Activated CD4-positive, alpha-beta T cell treated with anti-CD3 and anti-CD28 coated beads, Interleukin-2, amount 10 ng/mL, durations not matched to agents 24 days and 14 days (primary cell): ENCODE measurements at regions of chr4 and their contacts with region 1.

Region 1: DNA sequence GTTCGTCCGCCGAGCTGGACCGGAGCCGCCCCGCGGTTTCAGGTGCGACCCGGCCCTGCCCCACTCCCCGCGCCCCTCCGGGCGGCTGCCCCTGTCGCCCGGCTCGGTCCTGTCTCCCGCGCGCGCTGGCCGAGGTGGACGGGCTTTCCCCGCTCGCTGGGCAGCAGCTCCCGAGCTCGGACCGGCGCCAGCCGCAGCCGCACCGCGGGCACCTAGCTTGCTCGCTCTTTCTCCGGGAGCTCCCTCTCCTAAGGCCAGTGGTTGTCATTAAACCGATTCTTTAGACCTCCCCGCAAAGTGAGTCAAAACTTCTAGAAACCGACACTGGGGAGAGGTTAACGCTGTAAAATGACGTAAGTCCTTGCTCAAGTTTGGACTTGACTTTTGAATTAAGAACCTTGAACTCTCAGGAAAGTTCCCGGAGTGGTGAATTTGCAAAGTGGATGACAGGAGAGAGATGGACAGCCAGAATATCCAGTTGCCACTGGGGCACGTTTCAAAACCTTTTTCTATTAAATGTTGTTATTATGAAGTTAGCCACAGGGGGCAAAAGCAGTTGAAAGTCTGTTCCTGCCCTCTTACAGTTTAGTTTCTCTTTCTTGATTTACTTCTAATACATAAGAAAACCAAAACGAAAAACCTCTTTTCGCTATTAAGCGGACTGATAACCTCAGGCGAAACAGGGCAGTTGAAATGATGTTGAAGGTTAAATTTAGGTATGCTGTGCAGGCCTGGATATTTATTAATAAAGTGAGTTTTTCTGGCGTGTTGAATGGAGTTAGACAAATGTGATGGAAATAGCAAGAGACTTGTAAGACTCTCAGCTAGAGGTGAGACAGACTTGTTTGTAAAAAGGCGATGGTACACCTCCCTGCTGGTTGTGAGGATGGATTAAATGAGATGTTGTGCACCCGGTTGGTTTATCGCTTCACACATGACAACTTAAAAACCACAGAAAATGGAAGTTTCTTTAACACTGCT is 847 bp downstream of the PI4K2B start:
- DNase-seq: peak; percentile 83
- H3K4me3 Mint-ChIP-seq: peak overlapping the region; percentile 86
- H3K27ac Mint-ChIP-seq: peak overlapping the region; percentile 93
- H3K4me1 Mint-ChIP-seq: peaks cover 21% of the 10 kb centered on the region
- H3K27me3 Mint-ChIP-seq: no peaks in the 10 kb centered on the region

Region 2: GRCh38 chr4:25123236-25123635 is 111.4 kb before region 1 on chr4:
- intact Hi-C with region 1: loop called (anchors 1 kb)
- DNase-seq: peak; percentile 69
- H3K4me3 Mint-ChIP-seq: peak overlapping the region; percentile 23
- H3K27ac Mint-ChIP-seq: peak overlapping the region; percentile 56
- H3K4me1 Mint-ChIP-seq: peaks cover 14% of the 10 kb centered on the region
- H3K27me3 Mint-ChIP-seq: no peaks in the 10 kb centered on the region

Region 3: GRCh38 chr4:25180524-25181131 is 54.1 kb before region 1 on chr4:
- intact Hi-C with region 1: loop called (anchors 5 kb)
- DNase-seq: peak; percentile 78
- H3K4me3 Mint-ChIP-seq: no peak overlapping the region
- H3K27ac Mint-ChIP-seq: no peak overlapping the region
- H3K4me1 Mint-ChIP-seq: peaks cover 19% of the 10 kb centered on the region
- H3K27me3 Mint-ChIP-seq: no peaks in the 10 kb centered on the region

Region 4: GRCh38 chr4:25253071-25253445 is 18.4 kb after region 1 on chr4:
- intact Hi-C with region 1: loop called (anchors 2 kb)
- DNase-seq: peak; percentile 54
- H3K4me3 Mint-ChIP-seq: no peak overlapping the region
- H3K27ac Mint-ChIP-seq: peak overlapping the region; percentile 53
- H3K4me1 Mint-ChIP-seq: peaks cover 29% of the 10 kb centered on the region
- H3K27me3 Mint-ChIP-seq: no peaks in the 10 kb centered on the region

Region 5: GRCh38 chr4:25312496-25313200 is 78.0 kb after region 1 on chr4 and contains the start of gene ZCCHC4:
- intact Hi-C with region 1: loop called (anchors 1 kb)
- DNase-seq: peak; percentile 97
- H3K4me3 Mint-ChIP-seq: peak within 1 kb of the TSS; percentile 100
- H3K27ac Mint-ChIP-seq: peak within 1 kb of the TSS; percentile 97
- H3K4me1 Mint-ChIP-seq: peaks cover 11% of the 10 kb centered on the region
- H3K27me3 Mint-ChIP-seq: no peaks in the 10 kb centered on the region
- total RNA-seq, gene ZCCHC4: 15.5 and 15.6 TPM in 2 replicates

Region 6: GRCh38 chr4:25367004-25367621 is 132.4 kb after region 1 on chr4:
- intact Hi-C with region 1: loop called (anchors 2 kb)
- DNase-seq: no peak
- H3K4me3 Mint-ChIP-seq: no peak overlapping the region
- H3K27ac Mint-ChIP-seq: no peak overlapping the region
- H3K4me1 Mint-ChIP-seq: no peaks in the 10 kb centered on the region
- H3K27me3 Mint-ChIP-seq: no peaks in the 10 kb centered on the region

Region 7: DNA sequence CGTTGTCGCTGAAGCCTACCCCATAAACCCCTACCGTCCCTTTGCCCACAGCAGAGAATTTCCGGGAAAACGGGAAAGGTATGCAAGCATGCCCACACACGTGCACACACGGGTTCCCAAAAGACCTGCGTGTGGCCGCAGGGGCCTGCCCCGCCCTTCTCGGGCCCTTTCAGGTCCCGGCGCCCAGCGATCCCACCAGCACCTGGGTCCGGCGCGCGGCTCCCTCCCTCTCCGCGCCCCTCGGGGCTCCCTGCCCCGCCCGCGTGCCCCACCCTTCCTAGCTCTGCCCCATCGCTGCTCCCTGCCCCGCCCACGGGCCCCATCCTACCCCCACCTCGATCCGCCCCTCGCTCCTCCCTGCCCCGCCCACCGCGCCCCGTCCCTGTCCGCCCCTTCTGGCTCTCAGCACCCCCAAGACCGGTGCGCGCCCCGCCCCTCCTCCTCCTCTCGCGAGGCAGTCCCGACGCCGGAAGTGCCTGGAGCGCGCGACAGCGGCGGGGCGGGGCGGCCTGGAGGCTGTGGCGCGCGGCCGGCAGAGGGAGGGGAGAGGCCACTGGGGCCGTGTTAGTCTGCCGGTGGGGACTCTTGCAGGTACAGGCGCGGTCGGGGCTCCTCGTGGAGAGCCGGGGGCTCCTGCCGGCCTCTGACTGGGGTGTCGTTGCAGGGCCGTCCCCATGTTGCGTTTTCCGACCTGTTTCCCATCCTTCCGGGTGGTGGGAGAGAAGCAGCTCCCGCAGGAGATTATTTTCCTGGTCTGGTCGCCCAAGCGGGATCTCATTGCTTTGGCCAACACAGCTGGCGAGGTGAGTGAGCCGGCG is 142.3 kb after region 1 on chr4 and contains the start of gene ANAPC4:
- intact Hi-C with region 1: loop called (anchors 1 kb)
- DNase-seq: peak; percentile 99
- H3K4me3 Mint-ChIP-seq: no peak within 1 kb of the TSS
- H3K27ac Mint-ChIP-seq: peak within 1 kb of the TSS; percentile 87
- H3K4me1 Mint-ChIP-seq: peaks cover 8% of the 10 kb centered on the region
- H3K27me3 Mint-ChIP-seq: no peaks in the 10 kb centered on the region
- total RNA-seq, gene ANAPC4: 37.4 and 42.1 TPM in 2 replicates

Region 8: GRCh38 chr4:25400699-25401399 is 166.2 kb after region 1 on chr4:
- intact Hi-C with region 1: no loop called
- DNase-seq: no peak
- H3K4me3 Mint-ChIP-seq: no peak overlapping the region
- H3K27ac Mint-ChIP-seq: no peak overlapping the region
- H3K4me1 Mint-ChIP-seq: peaks cover 4% of the 10 kb centered on the region
- H3K27me3 Mint-ChIP-seq: no peaks in the 10 kb centered on the region

Region 9: GRCh38 chr4:25654971-25655963 is 420.6 kb after region 1 on chr4 and contains the start of gene SLC34A2:
- intact Hi-C with region 1: no loop called
- DNase-seq: no peak
- H3K4me3 Mint-ChIP-seq: no peak within 1 kb of the TSS
- H3K27ac Mint-ChIP-seq: no peak within 1 kb of the TSS
- H3K4me1 Mint-ChIP-seq: peaks cover 4% of the 10 kb centered on the region
- H3K27me3 Mint-ChIP-seq: peaks cover 38% of the 10 kb centered on the region
- total RNA-seq, gene SLC34A2: not detected in 2 replicates